GM12878 (cell line): ENCODE measurements at regions of chr7 and their contacts with region 1.

Region 1: DNA sequence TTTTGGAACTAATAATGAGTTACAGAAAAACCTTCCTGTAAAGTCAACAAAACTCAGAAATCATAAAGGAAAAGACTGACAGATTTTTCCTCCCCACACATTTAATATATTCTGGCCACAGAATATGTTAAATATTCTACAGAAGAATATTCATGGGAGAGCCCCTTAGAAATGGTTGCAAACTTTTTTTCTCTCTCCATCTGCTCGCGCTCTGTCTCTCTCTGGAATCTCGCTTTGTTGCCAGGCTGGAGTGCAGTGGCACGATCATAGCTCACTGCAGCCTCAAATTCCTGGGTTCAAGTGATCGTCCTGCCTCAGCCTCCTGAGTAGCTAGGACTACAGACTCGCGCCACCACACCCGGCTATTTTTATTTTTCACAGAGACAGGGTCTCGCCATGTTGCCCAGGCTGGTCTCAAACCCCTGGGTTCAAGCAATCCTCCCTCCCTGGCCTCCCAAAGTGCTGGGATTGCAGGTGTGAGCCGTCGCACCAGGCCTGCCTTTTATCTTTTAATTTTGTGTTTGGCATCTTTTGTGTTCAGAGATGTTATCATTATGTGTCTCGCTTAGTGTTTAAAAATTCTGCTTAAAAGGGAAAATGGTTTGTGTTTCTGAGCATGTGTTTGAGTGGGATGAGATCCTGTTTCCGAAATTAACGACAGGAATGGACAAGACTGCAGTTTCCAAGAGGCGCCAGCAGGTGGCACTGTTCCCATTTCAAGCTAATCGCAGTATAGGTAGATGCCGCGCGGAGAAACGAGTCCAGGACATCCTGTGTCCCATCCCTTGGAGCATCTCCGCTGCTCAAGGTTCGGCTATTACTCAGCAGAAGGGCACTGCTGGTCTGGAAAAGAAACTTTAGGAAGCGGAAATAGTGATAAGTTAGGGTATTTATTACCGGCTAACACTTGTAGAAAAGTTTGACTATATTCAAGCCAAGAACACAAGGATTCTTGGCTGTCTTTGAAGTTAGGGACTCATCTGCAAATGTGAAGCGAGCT is 23.1 kb upstream of the ST7 start:
- DNase-seq: peak; percentile 44
- ATAC-seq: peak; percentile 95
- H3K4me3 ChIP-seq: no peak overlapping the region
- H3K27ac ChIP-seq: no peak overlapping the region
- H3K4me1 ChIP-seq: peaks cover 5% of the 10 kb centered on the region
- H3K27me3 ChIP-seq: no peaks in the 10 kb centered on the region
- CTCF ChIP-seq: peak; percentile 83 to 95 (median 88)
- EP300 ChIP-seq: no peak
- POLR2A ChIP-seq: no peak
- RAD21 ChIP-seq: peak; percentile 99

Region 2: GRCh38 chr7:116918704-116919103 is 11.5 kb before region 1 on chr7:
- CTCF ChIA-PET with region 1: interaction called, 12 read pairs
- POLR2A ChIA-PET with region 1: no interaction called
- RAD21 ChIA-PET with region 1: interaction called, 4 read pairs
- SMC1A ChIA-PET with region 1: interaction called, 4 read pairs
- in situ Hi-C with region 1: no loop called
- intact Hi-C with region 1: no loop called
- DNase-seq: no peak
- ATAC-seq: no peak
- H3K4me3 ChIP-seq: no peak overlapping the region
- H3K27ac ChIP-seq: no peak overlapping the region
- H3K4me1 ChIP-seq: no peaks in the 10 kb centered on the region
- H3K27me3 ChIP-seq: no peaks in the 10 kb centered on the region
- CTCF ChIP-seq: no peak
- EP300 ChIP-seq: no peak
- POLR2A ChIP-seq: no peak
- RAD21 ChIP-seq: no peak

Region 3: GRCh38 chr7:116953727-116954442 is 23.7 kb after region 1 on chr7:
- CTCF ChIA-PET with region 1: interaction called, 23 read pairs
- POLR2A ChIA-PET with region 1: interaction called, 6 read pairs
- RAD21 ChIA-PET with region 1: interaction called, 7 read pairs
- SMC1A ChIA-PET with region 1: interaction called, 9 read pairs
- in situ Hi-C with region 1: no loop called
- intact Hi-C with region 1: loop called (anchors 2 kb)
- DNase-seq: no peak
- ATAC-seq: peak; percentile 21
- H3K4me3 ChIP-seq: peak overlapping the region; percentile 79
- H3K27ac ChIP-seq: peak overlapping the region; percentile 98
- H3K4me1 ChIP-seq: peaks cover 22% of the 10 kb centered on the region
- H3K27me3 ChIP-seq: no peaks in the 10 kb centered on the region
- CTCF ChIP-seq: no peak
- EP300 ChIP-seq: peak in 1 of 2 experiments; percentile 19; a peak in 1 of 4 replicates
- POLR2A ChIP-seq: peak; percentile 62
- RAD21 ChIP-seq: no peak

Region 4: GRCh38 chr7:117119192-117119924 is 189.1 kb after region 1 on chr7:
- CTCF ChIA-PET with region 1: interaction called, 324 read pairs
- POLR2A ChIA-PET with region 1: interaction called, 21 read pairs
- RAD21 ChIA-PET with region 1: interaction called, 52 read pairs
- SMC1A ChIA-PET with region 1: interaction called, 262 read pairs
- in situ Hi-C with region 1: no loop called
- intact Hi-C with region 1: loop called (anchors 1 kb)
- DNase-seq: peak; percentile 33
- ATAC-seq: peak; percentile 75
- H3K4me3 ChIP-seq: no peak overlapping the region
- H3K27ac ChIP-seq: no peak overlapping the region
- H3K4me1 ChIP-seq: peaks cover 3% of the 10 kb centered on the region
- H3K27me3 ChIP-seq: no peaks in the 10 kb centered on the region
- CTCF ChIP-seq: peak; percentile 75 to 87 (median 83)
- EP300 ChIP-seq: no peak
- POLR2A ChIP-seq: no peak
- RAD21 ChIP-seq: peak; percentile 97

Region 5: GRCh38 chr7:117385340-117386109 is 455.3 kb after region 1 on chr7:
- CTCF ChIA-PET with region 1: interaction called, 3 read pairs
- POLR2A ChIA-PET with region 1: no interaction called
- RAD21 ChIA-PET with region 1: no interaction called
- SMC1A ChIA-PET with region 1: interaction called, 4 read pairs
- in situ Hi-C with region 1: no loop called
- intact Hi-C with region 1: loop called (anchors 5 kb)
- DNase-seq: no peak
- ATAC-seq: peak; percentile 90
- H3K4me3 ChIP-seq: no peak overlapping the region
- H3K27ac ChIP-seq: no peak overlapping the region
- H3K4me1 ChIP-seq: no peaks in the 10 kb centered on the region
- H3K27me3 ChIP-seq: no peaks in the 10 kb centered on the region
- CTCF ChIP-seq: peak; percentile 25 to 68 (median 46); a peak in 4 of 6 replicates
- EP300 ChIP-seq: no peak
- POLR2A ChIP-seq: no peak
- RAD21 ChIP-seq: peak; percentile 75